ENCODE measurements at regions of chr13 and their contacts with region 1.

Region 1: DNA sequence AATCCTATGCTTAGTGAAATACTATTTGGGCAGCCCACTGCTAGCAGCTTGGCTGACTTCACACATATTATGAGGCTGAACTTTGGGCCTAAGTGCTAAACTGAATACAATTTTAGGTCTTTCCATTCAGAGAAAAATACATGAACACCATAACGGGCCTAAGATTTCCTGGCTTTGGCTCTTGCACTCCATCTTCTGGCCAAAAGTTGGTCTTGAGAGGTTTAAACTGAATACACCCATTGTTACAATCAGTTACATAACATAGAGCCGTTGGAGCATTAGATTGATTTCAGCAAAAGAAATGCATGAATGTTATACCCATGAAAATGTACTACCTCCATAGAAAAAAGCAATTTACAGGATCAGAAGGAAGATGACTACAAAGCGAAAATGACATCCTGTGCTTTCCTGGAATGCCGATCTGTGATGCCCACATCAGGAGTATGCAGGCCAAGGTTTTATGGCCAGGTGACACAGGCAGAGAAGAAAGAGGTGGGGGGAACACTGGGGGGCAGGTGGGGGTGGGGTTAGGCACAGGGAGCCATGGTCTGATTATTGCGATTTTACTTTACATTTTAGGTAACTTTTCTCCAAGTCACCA is 11.1 kb upstream of the SHISA2 start:
- DNase-seq: peak; percentile 66
- H3K4me3 Mint-ChIP-seq: no peak overlapping the region
- H3K27ac Mint-ChIP-seq: no peak overlapping the region
- H3K4me1 Mint-ChIP-seq: no peaks in the 10 kb centered on the region
- H3K27me3 Mint-ChIP-seq: no peaks in the 10 kb centered on the region

Region 2: DNA sequence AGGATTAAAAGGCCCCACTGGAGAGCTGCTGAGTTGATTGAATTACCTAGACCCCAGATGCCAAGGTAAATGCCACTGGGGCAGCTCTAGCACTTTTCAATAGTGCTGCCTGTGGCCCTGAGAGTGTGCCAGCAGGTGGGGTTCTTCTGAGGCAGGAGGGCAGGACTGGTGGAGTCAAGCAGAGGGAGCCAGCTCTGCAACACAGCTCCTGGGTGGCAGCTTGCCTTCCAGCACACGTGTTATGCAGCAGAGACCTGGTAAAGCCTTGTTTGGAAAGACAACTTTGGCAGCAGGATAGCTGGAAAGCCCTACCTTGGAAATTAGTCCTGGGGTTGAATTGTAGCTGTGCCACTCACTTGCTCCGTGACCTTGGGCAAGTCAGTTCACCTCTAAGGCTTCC is 384.5 kb before region 1 on chr13:
- CTCF ChIA-PET with region 1: no interaction called
- intact Hi-C with region 1: loop called (anchors 10 kb)
- DNase-seq: peak; percentile 19
- H3K4me3 Mint-ChIP-seq: no peak overlapping the region
- H3K27ac Mint-ChIP-seq: no peak overlapping the region
- H3K4me1 Mint-ChIP-seq: no peaks in the 10 kb centered on the region
- H3K27me3 Mint-ChIP-seq: no peaks in the 10 kb centered on the region

Region 3: GRCh38 chr13:25827831-25828465 is 235.0 kb before region 1 on chr13:
- CTCF ChIA-PET with region 1: interaction called, 11 read pairs
- intact Hi-C with region 1: loop called (anchors 1 kb)
- DNase-seq: no peak
- H3K4me3 Mint-ChIP-seq: no peak overlapping the region
- H3K27ac Mint-ChIP-seq: no peak overlapping the region
- H3K4me1 Mint-ChIP-seq: no peaks in the 10 kb centered on the region
- H3K27me3 Mint-ChIP-seq: no peaks in the 10 kb centered on the region

Region 4: GRCh38 chr13:25922376-25922775 is 140.6 kb before region 1 on chr13:
- CTCF ChIA-PET with region 1: no interaction called
- intact Hi-C with region 1: loop called (anchors 5 kb)
- DNase-seq: no peak
- H3K4me3 Mint-ChIP-seq: no peak overlapping the region
- H3K27ac Mint-ChIP-seq: no peak overlapping the region
- H3K4me1 Mint-ChIP-seq: peaks cover 8% of the 10 kb centered on the region
- H3K27me3 Mint-ChIP-seq: no peaks in the 10 kb centered on the region

Region 5: GRCh38 chr13:26112843-26113242 is 49.9 kb after region 1 on chr13:
- CTCF ChIA-PET with region 1: no interaction called
- intact Hi-C with region 1: no loop called
- DNase-seq: no peak
- H3K4me3 Mint-ChIP-seq: no peak overlapping the region
- H3K27ac Mint-ChIP-seq: no peak overlapping the region
- H3K4me1 Mint-ChIP-seq: no peaks in the 10 kb centered on the region
- H3K27me3 Mint-ChIP-seq: peaks cover 6% of the 10 kb centered on the region

Measured in activated naive CD4-positive, alpha-beta T cell treated with anti-CD3 and anti-CD28 coated beads for 36 hours (primary cell).